Activated naive CD4-positive, alpha-beta T cell treated with anti-CD3 and anti-CD28 coated beads, Interleukin-2, amount 10 ng/mL, durations not matched to agents 7 days and 5 days (primary cell): ENCODE measurements at regions of chr1 and their contacts with region 1.

Region 1: GRCh38 chr1:32933742-32934322 is 30.8 kb downstream of the RNF19B start:
- DNase-seq: no peak
- H3K4me3 Mint-ChIP-seq: no peak overlapping the region
- H3K27ac Mint-ChIP-seq: no peak overlapping the region
- H3K4me1 Mint-ChIP-seq: peaks cover 9% of the 10 kb centered on the region
- H3K27me3 Mint-ChIP-seq: no peaks in the 10 kb centered on the region

Region 2: DNA sequence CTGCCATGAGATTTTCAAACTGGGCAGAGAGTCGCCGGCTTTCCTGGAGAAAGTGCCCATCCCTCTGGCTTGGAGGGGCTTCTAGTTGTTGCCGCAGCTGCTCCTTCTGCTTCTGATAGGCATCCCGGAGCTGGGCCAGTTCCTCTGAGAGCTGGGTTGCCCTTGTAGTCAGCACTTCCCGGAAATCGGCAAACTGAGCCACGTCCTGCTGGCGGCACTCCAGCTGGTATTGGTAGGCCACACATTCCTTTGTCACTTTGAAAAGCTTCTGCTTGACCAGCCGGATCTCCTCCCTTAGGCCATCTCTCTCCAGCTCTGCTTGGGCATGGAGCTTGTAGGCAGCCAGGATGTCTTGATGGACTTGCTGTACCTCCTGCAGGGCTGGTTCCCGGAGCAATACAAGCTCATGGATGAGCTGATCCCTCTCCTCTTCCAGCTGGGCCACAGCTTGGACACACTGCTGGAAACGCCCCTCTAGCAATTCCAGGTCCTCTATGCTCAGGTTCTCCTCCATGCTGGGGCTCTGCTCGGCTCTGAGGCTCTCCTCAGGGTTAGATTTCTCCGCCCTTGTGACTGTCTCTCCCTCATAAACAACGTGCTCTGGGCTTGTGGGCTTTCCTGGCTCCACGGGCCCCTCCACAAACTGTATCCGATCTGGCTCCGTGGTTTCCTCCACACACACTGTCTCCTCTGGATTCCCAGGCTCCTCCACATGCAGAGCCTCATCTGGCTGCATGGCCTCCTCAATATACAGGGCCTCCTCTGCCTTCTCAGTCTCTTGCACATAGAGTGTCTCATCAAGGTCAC is 238.5 kb before region 1 on chr1:
- CTCF ChIA-PET with region 1: no interaction called
- DNase-seq: no peak
- H3K4me3 Mint-ChIP-seq: no peak overlapping the region
- H3K27ac Mint-ChIP-seq: no peak overlapping the region
- H3K4me1 Mint-ChIP-seq: peaks cover 12% of the 10 kb centered on the region
- H3K27me3 Mint-ChIP-seq: peaks cover 25% of the 10 kb centered on the region

Region 3: GRCh38 chr1:33001282-33001681 is 67.5 kb after region 1 on chr1:
- CTCF ChIA-PET with region 1: interaction called, 26 read pairs
- DNase-seq: no peak
- H3K4me3 Mint-ChIP-seq: no peak overlapping the region
- H3K27ac Mint-ChIP-seq: no peak overlapping the region
- H3K4me1 Mint-ChIP-seq: peaks cover 15% of the 10 kb centered on the region
- H3K27me3 Mint-ChIP-seq: no peaks in the 10 kb centered on the region

Region 4: GRCh38 chr1:33007190-33008050 is 73.6 kb after region 1 on chr1:
- CTCF ChIA-PET with region 1: interaction called, 26 read pairs
- DNase-seq: peak; percentile 29
- H3K4me3 Mint-ChIP-seq: no peak overlapping the region
- H3K27ac Mint-ChIP-seq: no peak overlapping the region
- H3K4me1 Mint-ChIP-seq: peaks cover 2% of the 10 kb centered on the region
- H3K27me3 Mint-ChIP-seq: no peaks in the 10 kb centered on the region

Region 5: DNA sequence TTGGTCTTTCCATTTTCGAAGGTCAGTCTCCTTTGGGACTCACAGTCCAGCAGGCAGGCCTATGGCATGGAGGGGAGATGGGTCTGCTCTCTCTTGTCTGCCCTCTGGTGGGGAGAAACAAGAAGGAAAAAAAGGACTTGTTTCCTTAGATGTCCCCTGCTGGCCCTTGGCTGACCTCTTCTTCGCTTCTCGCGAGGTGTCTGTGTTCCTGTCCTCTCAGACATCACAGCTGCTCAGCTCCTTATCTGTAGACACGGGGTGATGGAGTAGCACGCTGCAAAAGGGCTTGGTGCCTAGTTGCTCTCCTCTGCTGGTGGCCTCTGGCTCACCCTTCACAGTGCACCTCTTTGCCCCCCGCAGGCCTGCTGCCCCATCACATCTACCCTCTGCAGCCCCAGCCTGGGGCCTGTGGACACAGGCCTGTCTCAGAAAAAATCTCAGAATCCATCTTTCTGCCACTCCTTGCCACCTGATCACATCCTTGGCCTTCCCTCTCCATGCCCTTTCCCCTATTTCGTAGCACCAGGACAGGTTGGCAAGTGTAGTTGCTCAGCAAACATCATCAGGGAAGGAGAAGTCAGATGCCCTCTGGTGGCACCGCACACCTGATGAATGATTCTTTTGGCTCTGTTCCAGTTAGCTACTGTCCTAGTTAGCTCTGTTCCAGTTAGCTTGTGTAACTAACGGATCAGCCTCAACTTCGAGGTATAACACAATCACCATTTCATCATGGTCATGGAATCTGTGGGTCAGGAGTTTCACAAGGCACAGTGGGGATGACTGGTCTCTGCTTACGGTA is 121.6 kb after region 1 on chr1:
- CTCF ChIA-PET with region 1: interaction called, 84 read pairs
- DNase-seq: peak; percentile 37
- H3K4me3 Mint-ChIP-seq: no peak overlapping the region
- H3K27ac Mint-ChIP-seq: no peak overlapping the region
- H3K4me1 Mint-ChIP-seq: peaks cover 4% of the 10 kb centered on the region
- H3K27me3 Mint-ChIP-seq: peaks cover 10% of the 10 kb centered on the region

Region 6: DNA sequence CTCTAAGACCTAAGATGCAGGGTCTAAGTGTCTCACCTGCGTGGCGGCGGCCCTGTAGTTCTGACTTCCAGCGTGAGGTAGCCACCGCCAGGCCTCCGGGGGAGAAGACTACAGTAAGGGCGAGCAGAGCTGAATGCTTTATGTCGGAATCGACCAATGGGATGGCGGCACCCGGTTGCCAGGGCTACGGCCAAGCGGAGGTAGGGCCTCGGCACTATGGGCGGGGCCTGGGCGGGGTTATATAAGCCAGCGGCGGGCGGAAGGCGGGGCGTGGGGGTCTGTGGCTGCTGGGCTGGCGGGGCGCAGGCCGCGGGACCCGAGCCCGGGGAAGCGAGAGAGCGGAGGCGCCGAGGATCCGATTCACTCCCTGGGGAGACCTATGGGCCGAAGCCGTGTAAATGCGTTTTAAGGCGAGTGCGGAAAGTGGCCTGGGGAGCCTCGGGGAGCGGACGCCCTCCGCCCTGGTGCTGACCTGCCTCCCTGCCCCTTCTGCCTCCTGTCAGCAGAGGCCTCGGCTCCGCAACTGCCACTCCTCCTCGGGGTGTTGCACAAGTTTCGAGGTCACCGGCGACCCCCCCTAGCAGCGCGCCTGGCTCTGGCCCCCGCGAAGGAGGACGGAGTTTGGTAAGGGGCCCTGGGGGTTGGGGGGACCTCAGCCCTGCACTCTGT is 147.2 kb after region 1 on chr1 and contains the start of gene AZIN2:
- CTCF ChIA-PET with region 1: interaction called, 35 read pairs
- DNase-seq: peak; percentile 98
- H3K4me3 Mint-ChIP-seq: peak within 1 kb of the TSS; percentile 73
- H3K27ac Mint-ChIP-seq: peak within 1 kb of the TSS; percentile 68
- H3K4me1 Mint-ChIP-seq: peaks cover 26% of the 10 kb centered on the region
- H3K27me3 Mint-ChIP-seq: peaks cover 37% of the 10 kb centered on the region

Region 7: GRCh38 chr1:33181921-33182341 is 248.1 kb after region 1 on chr1 and contains the start of gene TRIM62:
- CTCF ChIA-PET with region 1: no interaction called
- DNase-seq: peak; percentile 82
- H3K4me3 Mint-ChIP-seq: peak within 1 kb of the TSS; percentile 92
- H3K27ac Mint-ChIP-seq: peak within 1 kb of the TSS; percentile 92
- H3K4me1 Mint-ChIP-seq: peaks cover 20% of the 10 kb centered on the region
- H3K27me3 Mint-ChIP-seq: peaks cover 46% of the 10 kb centered on the region